G401 (cell line): ENCODE measurements at regions of chr15 and their contacts with region 1.

Region 1: DNA sequence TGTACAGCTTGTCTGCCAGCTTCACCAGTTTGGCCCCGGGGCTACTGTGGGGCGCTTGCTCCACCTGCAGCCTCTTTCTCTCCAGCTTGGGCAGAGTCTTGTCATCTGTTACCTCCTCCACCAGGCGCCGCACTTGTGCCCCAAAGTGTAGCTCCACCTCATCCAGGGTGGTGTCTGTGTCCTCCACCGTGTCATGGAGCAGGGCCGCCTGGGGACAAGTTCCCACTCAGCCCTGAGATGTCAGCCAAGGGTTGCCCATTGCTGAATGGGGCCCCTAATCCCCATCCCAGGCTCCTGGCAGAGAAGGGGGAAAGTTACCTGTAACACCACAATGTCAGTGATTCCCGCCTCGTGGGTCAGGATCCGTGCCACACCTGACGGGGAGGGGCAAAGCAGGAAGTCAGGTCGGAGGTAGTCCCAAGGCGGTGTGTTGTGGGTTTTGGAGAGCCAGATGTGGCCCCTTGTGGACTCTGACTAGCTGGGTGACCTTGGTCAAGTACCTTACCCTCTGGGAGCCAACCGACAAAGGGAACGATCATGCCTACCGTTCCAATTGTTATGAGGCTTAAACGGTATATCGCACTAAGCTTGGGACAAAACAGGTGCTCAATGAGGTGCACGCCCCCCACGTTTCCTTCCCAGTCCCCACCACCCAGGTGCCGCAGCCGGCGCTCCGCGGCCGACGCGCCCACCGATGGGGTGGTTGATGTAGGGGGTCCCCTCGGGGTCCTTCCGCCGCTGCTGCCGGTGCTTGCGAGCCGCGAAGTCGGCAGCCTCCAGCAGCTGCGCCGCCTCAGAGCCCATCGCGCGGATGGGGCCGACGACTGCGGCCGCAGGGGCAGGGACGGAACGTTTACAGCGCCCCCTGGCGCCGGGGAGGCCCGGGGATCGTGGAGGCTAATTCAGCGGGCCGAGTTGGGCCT is at the start of gene HDDC3:
- DNase-seq: peak; percentile 83
- total RNA-seq, gene HDDC3: 10.8 and 17.1 TPM in 2 replicates

Region 2: GRCh38 chr15:90729261-90729660 is 202.7 kb before region 1 on chr15:
- in situ Hi-C with region 1: no loop called
- DNase-seq: no peak

Region 3: DNA sequence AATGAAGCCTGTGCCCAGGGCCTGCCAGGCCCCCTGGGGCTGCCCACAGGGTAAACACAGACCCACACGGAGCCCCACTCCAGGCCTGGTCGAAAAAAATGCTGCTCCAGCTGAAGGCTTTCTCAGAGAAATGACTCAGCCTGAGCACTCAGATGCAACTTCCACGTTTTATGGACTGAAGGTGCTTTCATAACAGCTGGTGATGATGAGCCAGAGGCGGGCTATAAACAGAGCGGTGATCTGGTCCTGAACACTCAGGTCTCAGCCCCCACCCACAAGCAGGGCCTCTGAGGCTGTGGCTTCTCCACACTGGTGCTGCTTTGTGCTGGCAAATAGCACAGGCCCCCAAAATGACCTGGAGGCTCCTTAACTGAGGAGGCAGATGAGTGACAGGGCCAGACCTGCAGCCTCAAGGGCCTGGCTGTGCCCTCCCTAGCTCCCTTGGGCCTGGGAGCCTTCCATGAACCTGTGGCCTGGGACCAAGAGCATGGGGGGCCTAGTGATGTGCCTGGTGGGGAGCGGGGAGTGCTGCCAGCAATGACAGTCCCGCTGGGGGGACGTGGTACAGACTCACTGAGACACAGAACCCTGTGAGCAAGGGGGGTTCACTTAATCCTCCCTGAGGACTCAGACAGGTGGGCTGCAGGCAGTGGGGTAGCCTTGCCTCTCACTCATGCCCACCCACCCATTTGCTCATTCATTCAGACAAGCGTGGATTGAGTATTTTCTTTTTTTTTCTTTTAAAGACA is 86.6 kb before region 1 on chr15:
- in situ Hi-C with region 1: loop called (anchors 25 kb)
- DNase-seq: no peak